HepG2 (cell line): ENCODE measurements at regions of chr2 and their contacts with region 1.

Region 1: DNA sequence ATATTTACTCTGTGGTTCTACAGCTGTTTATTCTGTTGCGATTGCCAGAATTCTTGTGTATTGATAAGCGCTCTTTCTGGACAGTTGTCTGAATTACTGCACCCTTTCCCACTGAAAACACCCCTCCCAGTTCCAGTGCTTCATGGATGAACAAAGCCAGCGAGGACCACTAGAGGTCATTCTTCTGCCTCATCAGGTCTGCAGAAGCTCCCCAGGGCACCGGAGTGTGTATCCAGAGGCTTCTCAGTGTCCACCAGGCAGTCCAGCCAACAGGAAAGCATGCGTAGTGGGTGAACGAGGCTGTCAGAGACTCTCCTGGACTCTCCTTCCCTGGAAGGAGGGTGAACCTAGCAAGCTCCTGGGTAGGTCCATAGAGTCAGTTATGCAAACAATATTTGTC is 40.6 kb upstream of the INHBB start:
- DNase-seq: peak; percentile 76
- ATAC-seq: peak; percentile 96
- H3K4me3 ChIP-seq: no peak overlapping the region
- H3K27ac ChIP-seq: no peak overlapping the region
- H3K4me1 ChIP-seq: peaks cover 7% of the 10 kb centered on the region
- H3K27me3 ChIP-seq: no peaks in the 10 kb centered on the region
- CTCF ChIP-seq: peak; percentile 84
- EP300 ChIP-seq: no peak
- POLR2A ChIP-seq: no peak
- RAD21 ChIP-seq: peak; percentile 70

Region 2: DNA sequence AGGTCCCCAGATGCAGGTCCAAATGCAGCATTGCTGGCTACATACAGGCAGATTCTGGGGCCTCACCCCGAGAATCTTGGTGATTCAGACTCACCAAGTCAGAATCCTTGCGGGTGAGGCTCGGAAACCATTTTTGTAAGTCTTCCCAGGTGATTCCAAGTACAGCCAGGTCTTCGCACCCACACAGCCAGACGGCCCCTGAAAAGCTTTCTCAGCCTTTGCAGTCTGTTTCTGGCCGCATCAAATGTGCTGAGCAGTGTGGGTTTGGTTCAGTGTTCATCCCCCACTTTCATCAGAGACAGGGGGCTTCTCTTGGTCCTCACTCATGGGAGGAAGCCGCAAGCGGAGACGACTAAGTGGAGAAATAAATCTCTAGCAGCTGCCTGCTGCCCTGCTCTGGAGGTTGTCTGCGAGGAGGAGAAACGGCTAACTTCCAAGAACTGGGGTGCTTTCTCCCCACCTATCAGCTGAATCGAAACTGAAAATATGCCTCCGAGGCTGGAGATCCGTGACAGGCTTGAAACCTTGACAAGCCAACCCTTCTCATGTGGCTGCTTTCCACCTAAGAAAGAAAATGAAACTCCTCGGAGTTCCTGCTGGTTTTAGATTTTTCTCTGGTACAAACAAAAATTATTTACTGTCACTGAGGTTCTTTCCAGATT is 73.2 kb before region 1 on chr2:
- CTCF ChIA-PET with region 1: no interaction called
- POLR2A ChIA-PET with region 1: no interaction called
- in situ Hi-C with region 1: no loop called
- intact Hi-C with region 1: loop called (anchors 5 kb)
- DNase-seq: no peak
- ATAC-seq: peak; percentile 14
- H3K4me3 ChIP-seq: peak overlapping the region; percentile 61 to 77 (median 74)
- H3K27ac ChIP-seq: no peak overlapping the region
- H3K4me1 ChIP-seq: peaks cover 67% of the 10 kb centered on the region
- H3K27me3 ChIP-seq: peaks cover 4 to 27% of the 10 kb centered on the region in 2 experiments; a peak in 4 of 5 replicates
- CTCF ChIP-seq: no peak
- EP300 ChIP-seq: no peak
- POLR2A ChIP-seq: no peak
- RAD21 ChIP-seq: no peak